ENCODE measurements at regions of chr10 and their contacts with region 1.

Region 1: GRCh38 chr10:14671386-14671831 is 103.3 kb downstream of the FAM107B start:
- DNase-seq: no peak
- ATAC-seq: no peak
- H3K4me3 ChIP-seq: no peak overlapping the region
- H3K4me3 Mint-ChIP-seq: no peak overlapping the region
- H3K27ac ChIP-seq: no peak overlapping the region
- H3K27ac Mint-ChIP-seq: no peak overlapping the region
- H3K4me1 ChIP-seq: no peaks in the 10 kb centered on the region
- H3K4me1 Mint-ChIP-seq: peaks cover 0 to 17% (median 9%) of the 10 kb centered on the region in 7 donors
- H3K27me3 ChIP-seq: no peaks in the 10 kb centered on the region
- H3K27me3 Mint-ChIP-seq: peaks cover 0 to 5% (median 0%) of the 10 kb centered on the region in 5 donors

Region 2: GRCh38 chr10:14751014-14751896 is 79.8 kb after region 1 on chr10:
- CTCF ChIA-PET with region 1: no interaction called
- POLR2A ChIA-PET with region 1: interaction called, 15 read pairs
- intact Hi-C with region 1: no loop called
- DNase-seq: no peak
- ATAC-seq: peak; percentile 40
- H3K4me3 ChIP-seq: no peak overlapping the region
- H3K4me3 Mint-ChIP-seq: no peak overlapping the region
- H3K27ac ChIP-seq: no peak overlapping the region
- H3K27ac Mint-ChIP-seq: peak overlapping the region in 1 of 9 donors; percentile 70
- H3K4me1 ChIP-seq: no peaks in the 10 kb centered on the region
- H3K4me1 Mint-ChIP-seq: no peaks in the 10 kb centered on the region
- H3K27me3 ChIP-seq: no peaks in the 10 kb centered on the region
- H3K27me3 Mint-ChIP-seq: no peaks in the 10 kb centered on the region

Measured in naive thymus-derived CD4-positive, alpha-beta T cell (primary cell).